Activated CD4-positive, alpha-beta T cell treated with anti-CD3 and anti-CD28 coated beads for 36 hours (primary cell): ENCODE measurements at regions of chr2 and their contacts with region 1.

Region 1: DNA sequence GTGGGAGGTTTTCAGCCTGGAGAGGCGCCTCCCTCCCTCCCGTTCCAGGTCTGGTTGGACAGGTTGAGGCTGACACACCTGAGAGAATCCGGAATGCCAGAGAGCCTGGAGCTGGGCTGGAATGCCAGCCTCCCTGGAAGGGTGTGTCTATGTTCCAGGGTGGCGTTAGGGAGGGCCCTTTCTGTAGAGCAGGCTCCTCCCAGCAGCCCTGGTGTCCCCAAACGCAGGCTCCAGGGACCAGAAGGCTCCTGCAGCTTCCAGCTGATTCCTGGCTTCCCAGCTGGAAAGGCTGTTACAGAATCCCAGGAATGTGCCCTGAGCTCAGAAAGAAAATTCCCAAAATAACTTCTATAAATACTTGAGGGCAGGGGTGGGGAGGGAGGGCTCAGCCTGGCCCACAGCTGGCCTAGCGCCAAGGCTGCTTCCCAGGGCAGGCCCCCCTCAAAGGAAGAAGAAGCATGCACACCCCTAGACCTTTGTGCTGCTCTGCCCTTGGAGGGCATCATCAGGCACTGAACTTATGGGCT is 85.4 kb downstream of the STPG4 start:
- DNase-seq: no peak
- ATAC-seq: no peak
- H3K4me3 Mint-ChIP-seq: no peak overlapping the region
- H3K27ac Mint-ChIP-seq: no peak overlapping the region
- H3K4me1 Mint-ChIP-seq: peaks cover 36% of the 10 kb centered on the region
- H3K27me3 Mint-ChIP-seq: no peaks in the 10 kb centered on the region

Region 2: DNA sequence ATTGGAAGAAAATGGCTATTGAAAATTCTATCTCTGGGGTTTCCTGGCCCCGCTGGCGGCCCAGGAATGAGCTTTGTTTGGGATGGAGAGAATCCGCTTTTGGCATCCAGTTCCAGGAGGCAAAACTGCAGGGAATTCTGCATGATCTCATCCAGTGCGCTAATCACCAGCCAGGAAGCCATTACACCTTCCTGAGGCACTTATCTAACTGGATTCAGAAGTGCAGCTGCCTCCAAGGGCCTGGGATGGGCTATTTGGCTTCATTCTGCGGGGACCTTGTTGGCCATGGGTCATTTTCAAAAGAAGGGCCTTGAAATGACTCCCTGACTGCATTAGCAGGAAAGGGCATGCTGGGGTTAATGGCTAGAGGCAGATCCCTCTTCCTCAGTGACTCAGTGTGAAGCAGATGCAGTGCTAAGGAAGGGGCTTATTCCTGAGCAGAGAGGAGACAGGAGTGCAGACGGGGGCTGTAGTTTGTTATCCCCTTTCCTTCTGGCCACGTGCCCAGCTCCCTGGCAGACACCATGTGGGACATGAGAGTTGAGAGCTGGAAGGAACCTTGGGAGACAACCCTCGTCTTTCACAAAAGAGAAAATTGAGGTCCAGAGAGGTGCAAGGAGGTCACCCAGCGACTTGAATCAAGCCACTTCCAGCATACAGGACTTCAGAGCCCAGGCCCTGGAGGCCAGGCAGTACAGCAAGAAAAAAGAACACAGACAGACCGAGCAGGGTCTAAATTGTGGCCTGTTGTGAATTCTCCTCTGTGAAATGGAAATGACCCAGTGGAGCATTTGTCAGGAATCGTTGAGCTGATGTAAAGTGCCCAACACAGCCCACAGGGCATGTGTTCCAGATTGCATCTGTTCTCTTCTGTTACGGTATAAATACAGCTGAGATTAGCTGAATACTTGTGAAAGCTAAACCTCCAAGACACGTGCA is 1256.4 kb before region 1 on chr2:
- CTCF ChIA-PET with region 1: no interaction called
- POLR2A ChIA-PET with region 1: no interaction called
- intact Hi-C with region 1: loop called in 1 of 2 experiments (anchors 10 kb)
- DNase-seq: no peak
- ATAC-seq: no peak
- H3K4me3 Mint-ChIP-seq: no peak overlapping the region
- H3K27ac Mint-ChIP-seq: no peak overlapping the region
- H3K4me1 Mint-ChIP-seq: no peaks in the 10 kb centered on the region
- H3K27me3 Mint-ChIP-seq: no peaks in the 10 kb centered on the region